Lower leg skin (tissue), 4 donors: ENCODE measurements at regions of chr17 and their contacts with region 1.

Region 1: DNA sequence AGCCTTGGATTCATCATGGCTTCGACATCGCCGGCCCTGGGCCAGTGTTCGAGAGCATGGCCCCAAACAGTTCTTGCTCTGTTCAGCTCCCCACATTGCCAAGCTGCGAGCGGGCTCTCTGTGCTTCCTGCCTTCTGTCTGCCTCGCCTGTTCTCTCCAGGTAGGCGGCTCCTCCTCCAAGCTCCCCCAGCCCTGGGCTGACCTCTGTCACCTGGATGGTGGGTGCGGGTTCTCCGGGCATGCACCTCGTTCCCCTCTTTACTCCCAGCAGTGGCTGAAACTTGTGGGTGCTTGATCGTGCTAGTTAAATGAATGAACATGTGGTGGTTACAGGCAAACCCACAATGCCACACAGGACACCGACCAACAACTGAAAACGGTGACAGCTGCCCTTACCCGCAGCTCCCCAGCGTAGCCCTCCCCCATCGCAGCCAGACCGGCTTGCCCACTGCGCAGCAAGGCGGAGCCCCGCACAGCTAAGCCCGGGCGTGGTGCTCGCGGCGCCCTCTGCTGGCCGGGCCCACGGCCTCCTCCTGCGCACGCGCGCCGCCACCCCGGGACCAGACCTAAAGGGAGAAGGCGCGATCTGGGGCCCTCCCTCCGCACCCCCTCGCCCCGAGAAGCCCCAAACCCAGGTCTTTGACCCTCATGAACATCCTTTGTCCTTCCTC is 23.0 kb upstream of the EIF1 start:
- DNase-seq: peak; percentile 78 to 97
- H3K4me3 ChIP-seq: peak overlapping the region; percentile 27
- CTCF ChIP-seq: peak in 1 of 3 donors; percentile 52
- POLR2A ChIP-seq: no peak

Region 2: GRCh38 chr17:40809721-40810421 is 855.8 kb before region 1 on chr17:
- intact Hi-C with region 1: loop called (anchors 5 kb)
- DNase-seq: no peak
- H3K4me3 ChIP-seq: no peak overlapping the region
- CTCF ChIP-seq: no peak
- POLR2A ChIP-seq: no peak

Region 3: GRCh38 chr17:40857535-40857934 is 808.2 kb before region 1 on chr17:
- intact Hi-C with region 1: loop called (anchors 5 kb)
- DNase-seq: no peak
- H3K4me3 ChIP-seq: no peak overlapping the region
- CTCF ChIP-seq: no peak
- POLR2A ChIP-seq: no peak

Region 4: GRCh38 chr17:41500131-41500911 is 165.4 kb before region 1 on chr17:
- intact Hi-C with region 1: no loop called
- DNase-seq: no peak
- H3K4me3 ChIP-seq: no peak overlapping the region
- CTCF ChIP-seq: no peak
- POLR2A ChIP-seq: no peak